ENCODE measurements at regions of chr5 and their contacts with region 1.

Region 1: DNA sequence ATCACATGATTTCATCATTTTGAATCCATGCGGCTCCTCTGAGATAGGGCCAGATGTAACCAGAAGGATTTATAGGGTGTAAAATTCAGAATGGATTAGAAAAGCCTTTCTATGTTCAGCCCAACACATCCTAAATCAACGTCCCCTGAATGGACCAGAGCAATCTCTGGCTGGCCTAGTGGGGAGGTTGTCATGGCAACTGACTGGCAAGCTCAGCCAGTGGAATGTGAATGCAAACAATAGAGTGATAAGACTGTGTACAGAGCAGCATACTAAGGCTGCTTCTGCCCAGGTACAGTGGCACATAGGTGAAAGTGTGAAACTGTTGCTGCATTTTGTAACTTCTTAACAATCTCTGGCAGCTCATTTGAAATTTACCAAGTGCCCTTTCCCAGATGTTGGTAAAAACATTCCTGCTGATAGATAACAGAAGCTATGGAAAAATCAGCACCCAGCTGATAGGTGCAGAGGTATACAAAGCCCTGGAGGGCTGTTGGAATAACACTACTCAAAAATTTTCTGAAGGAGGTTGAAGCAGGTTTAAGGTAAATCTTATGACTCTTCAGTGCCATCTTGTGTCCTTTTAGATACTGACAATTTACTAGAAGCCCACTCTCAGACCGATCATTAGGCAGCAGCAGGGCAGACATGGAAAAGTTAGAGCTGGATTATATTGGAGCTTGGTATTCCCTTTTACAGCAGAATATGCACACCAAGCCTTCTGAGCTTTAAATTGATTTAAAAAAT is 267.2 kb downstream of the RAB3C start:
- DNase-seq: peak; percentile 17
- ATAC-seq: peak; percentile 93
- H3K4me3 Mint-ChIP-seq: no peak overlapping the region
- H3K27ac Mint-ChIP-seq: no peak overlapping the region; the same call in 1 of the 2 replicates
- H3K4me1 Mint-ChIP-seq: peaks cover 5% of the 10 kb centered on the region
- H3K27me3 Mint-ChIP-seq: no peaks in the 10 kb centered on the region
- CTCF ChIP-seq: peak; percentile 27; the same call in 1 of the 2 replicates

Region 2: DNA sequence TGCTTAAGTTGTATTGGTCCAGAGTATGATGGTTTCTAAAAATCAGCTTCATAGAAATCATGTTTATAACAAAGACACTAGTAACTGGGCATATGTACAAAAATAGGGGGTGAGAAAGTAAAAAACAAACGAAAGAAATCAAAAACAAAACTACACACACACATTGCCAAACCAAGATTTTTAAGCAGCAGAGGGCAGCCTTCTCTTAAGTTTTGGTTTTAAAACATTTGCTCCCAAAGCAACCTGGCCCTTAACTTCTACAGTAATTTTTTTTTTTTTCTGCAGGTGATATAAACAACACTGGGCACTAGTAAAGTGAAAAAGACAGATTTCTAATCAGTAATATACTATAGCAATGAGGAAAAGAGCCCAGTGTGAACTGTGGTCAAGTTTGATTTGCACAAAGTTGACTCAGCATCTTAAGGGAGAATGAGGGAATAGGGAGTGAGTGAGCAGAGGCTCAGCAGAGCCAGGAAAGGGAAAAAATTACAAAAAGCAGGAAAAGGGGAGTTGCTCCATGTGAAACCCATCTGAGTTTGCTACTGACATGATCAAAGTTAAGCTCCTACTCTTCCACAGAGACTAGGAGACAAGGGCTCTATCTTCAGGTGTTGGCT is 372.2 kb before region 1 on chr5:
- CTCF ChIA-PET with region 1: interaction called, 39 read pairs
- POLR2A ChIA-PET with region 1: no interaction called
- DNase-seq: no peak
- ATAC-seq: peak; percentile 26; the same call in 1 of the 2 replicates
- H3K4me3 Mint-ChIP-seq: no peak overlapping the region
- H3K27ac Mint-ChIP-seq: no peak overlapping the region
- H3K4me1 Mint-ChIP-seq: no peaks in the 10 kb centered on the region
- H3K27me3 Mint-ChIP-seq: no peaks in the 10 kb centered on the region; the same call in 1 of the 2 replicates
- CTCF ChIP-seq: no peak

Region 3: GRCh38 chr5:58498340-58498942 is 351.7 kb before region 1 on chr5:
- CTCF ChIA-PET with region 1: interaction called, 69 read pairs
- POLR2A ChIA-PET with region 1: no interaction called
- DNase-seq: peak; percentile 66
- ATAC-seq: peak; percentile 63
- H3K4me3 Mint-ChIP-seq: no peak overlapping the region
- H3K27ac Mint-ChIP-seq: no peak overlapping the region
- H3K4me1 Mint-ChIP-seq: peaks cover 14% of the 10 kb centered on the region
- H3K27me3 Mint-ChIP-seq: no peaks in the 10 kb centered on the region; the same call in 1 of the 2 replicates
- CTCF ChIP-seq: peak; percentile 74

Measured in WTC11 (cell line).